ENCODE measurements at regions of chr6 and their contacts with region 1.

Region 1: GRCh38 chr6:29724937-29725869 is 2.0 kb downstream of the HLA-F start:
- DNase-seq: no peak
- ATAC-seq: no peak
- H3K4me3 Mint-ChIP-seq: peak overlapping the region; percentile 93
- H3K27ac Mint-ChIP-seq: peak overlapping the region; percentile 94
- H3K4me1 Mint-ChIP-seq: peaks cover 66% of the 10 kb centered on the region
- H3K27me3 Mint-ChIP-seq: no peaks in the 10 kb centered on the region
- CTCF ChIP-seq: no peak

Region 2: GRCh38 chr6:29737707-29738630 is 12.8 kb after region 1 on chr6:
- CTCF ChIA-PET with region 1: interaction called, 29 read pairs
- POLR2A ChIA-PET with region 1: interaction called, 7 read pairs
- intact Hi-C with region 1: no loop called
- DNase-seq: peak; percentile 83
- ATAC-seq: peak; percentile 85
- H3K4me3 Mint-ChIP-seq: no peak overlapping the region
- H3K27ac Mint-ChIP-seq: no peak overlapping the region
- H3K4me1 Mint-ChIP-seq: peaks cover 11% of the 10 kb centered on the region
- H3K27me3 Mint-ChIP-seq: no peaks in the 10 kb centered on the region
- CTCF ChIP-seq: peak; percentile 84

Region 3: DNA sequence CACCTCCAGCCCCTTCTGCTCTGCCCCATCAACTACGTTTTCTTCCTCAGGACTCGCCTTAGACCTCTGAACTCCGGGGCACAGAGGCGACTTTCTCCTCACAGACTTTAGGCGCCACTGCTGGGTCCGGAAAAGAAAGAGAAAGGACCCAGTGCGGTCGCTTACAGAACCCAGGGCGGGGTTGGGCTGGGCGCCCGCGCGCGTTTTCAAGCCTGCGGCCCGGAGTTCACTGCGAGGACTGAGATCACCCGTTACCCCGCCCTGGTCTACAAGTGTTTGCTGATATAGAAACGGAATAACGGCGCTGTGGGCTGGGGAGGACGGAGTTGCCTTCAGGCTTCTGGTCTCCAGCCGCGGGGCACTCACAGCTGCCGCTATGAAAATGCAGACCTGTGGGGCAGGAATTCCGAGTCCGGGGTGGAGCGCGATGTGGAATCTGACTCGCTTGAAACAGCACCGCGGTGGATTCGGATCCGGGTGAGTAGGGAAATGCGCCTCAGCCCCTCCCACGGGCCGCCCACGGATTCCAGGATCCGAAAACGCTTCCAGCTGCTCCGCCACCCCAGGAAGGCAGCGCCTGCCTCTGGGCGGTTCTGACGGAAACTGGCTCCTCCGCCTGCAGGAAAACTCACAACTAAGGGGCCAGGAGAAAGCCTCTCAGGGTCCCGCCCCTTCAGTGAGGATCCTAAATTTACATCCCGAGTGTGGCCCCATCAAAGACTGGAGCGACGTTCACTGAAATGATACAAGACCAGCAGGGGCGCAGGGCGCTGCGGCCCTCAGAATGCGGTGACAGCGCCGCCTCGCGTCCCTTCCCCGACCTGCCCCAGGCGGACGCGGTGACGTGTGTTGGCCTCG is 27.5 kb after region 1 on chr6:
- CTCF ChIA-PET with region 1: interaction called, 7 read pairs
- POLR2A ChIA-PET with region 1: interaction called, 15 read pairs
- intact Hi-C with region 1: no loop called
- DNase-seq: peak; percentile 91
- ATAC-seq: peak; percentile 77
- H3K4me3 Mint-ChIP-seq: peak overlapping the region; percentile 89
- H3K27ac Mint-ChIP-seq: peak overlapping the region; percentile 92
- H3K4me1 Mint-ChIP-seq: peaks cover 30% of the 10 kb centered on the region
- H3K27me3 Mint-ChIP-seq: no peaks in the 10 kb centered on the region
- CTCF ChIP-seq: peak; percentile 99

Region 4: DNA sequence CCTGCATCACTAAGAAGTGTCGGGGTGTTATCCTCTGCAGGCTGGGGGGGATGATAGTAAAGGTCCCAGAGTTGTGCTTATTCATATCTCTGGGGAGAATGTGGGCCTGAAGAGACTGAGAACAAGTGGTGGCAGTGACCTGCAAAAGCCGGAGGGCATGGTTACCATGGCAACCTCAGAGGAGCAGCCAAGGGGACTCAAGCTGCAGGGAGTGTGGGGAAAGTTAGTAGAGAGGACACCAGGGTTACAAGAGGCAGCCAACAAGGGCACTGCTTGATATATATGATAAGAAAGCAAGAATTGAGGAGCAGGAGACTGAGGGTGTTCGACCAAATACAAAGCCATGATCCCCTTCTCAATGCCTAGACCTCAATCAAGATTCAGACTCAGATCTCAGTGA is 44.1 kb after region 1 on chr6:
- CTCF ChIA-PET with region 1: no interaction called
- POLR2A ChIA-PET with region 1: no interaction called
- intact Hi-C with region 1: no loop called
- DNase-seq: no peak
- ATAC-seq: no peak
- H3K4me3 Mint-ChIP-seq: no peak overlapping the region
- H3K27ac Mint-ChIP-seq: no peak overlapping the region
- H3K4me1 Mint-ChIP-seq: peaks cover 3% of the 10 kb centered on the region
- H3K27me3 Mint-ChIP-seq: peaks cover 23% of the 10 kb centered on the region
- CTCF ChIP-seq: no peak

Region 5: DNA sequence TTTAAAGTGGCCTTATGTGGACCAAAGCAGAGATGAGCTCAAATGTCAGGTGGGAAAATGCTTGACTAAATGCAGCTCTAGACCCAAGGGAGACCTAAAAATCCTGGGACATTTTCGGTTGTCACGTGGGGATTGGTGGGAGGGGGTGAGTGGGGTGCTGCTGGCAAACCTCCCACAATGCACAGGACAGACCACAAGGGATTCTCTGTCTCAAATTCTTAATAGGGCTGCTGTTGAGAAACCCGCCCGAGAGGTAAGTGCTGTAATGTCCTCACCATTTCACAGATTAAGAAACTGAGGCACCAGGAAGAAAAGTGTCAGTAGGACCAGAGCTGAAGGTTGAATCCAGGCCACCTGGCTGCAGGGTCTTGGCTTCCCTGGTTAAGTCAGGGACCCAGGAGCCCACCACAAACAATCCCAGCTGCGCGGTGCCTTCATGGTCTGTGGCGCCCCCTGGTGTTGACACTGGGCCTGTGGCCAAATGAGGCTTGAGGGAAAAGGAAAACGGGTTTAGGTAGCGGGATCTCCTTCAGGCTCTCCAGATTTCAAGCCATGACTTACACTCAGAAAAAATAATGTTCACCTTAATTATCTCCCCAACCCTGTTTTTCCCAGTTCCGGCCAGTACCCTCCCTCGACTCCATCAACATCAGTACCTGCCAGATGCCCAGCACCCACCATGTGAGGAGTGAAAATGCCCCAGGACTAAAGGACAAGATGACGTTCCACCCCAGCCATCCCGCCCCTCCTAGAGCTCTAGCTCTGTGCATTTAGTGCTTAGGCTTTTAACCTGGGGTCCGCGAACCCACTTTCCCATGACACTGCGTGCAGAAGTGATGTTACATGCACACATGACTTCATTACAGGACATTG is 109.6 kb after region 1 on chr6:
- CTCF ChIA-PET with region 1: interaction called, 11 read pairs
- POLR2A ChIA-PET with region 1: no interaction called
- intact Hi-C with region 1: no loop called
- DNase-seq: peak; percentile 63
- ATAC-seq: peak; percentile 45
- H3K4me3 Mint-ChIP-seq: no peak overlapping the region
- H3K27ac Mint-ChIP-seq: no peak overlapping the region
- H3K4me1 Mint-ChIP-seq: no peaks in the 10 kb centered on the region
- H3K27me3 Mint-ChIP-seq: peaks cover 44% of the 10 kb centered on the region
- CTCF ChIP-seq: peak; percentile 95